ENCODE measurements at regions of chr1 and their contacts with region 1.

Region 1: DNA sequence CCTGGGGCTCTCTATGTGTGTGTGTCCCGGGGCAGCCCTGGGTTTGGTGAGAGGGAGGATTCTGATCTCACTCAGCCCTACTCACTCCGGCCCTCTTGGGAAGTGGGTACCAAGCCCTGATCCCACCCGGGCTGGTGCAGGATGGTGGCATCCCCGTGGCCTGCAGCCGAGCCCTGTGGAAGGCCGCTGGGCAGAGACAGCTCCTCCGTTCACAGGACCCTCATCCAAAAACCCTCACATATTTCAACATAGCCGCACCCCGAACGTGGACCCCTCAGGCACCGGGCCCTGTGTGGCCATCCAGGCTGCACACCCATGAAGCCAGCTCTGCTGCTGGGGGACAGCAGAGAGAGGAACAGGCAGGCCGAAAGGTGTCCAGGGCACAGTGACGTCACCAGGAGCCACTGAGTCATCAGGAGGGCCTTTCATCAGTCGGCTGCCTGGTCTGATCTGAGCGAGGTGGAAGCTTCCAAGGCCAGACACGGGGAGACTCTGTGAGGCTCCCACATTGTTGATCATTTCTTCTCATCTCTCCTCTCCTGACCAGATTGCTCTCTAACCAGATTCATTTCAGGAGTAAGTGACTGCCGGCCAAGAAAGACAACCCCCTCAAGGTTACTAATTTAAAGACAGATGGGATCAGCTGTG is 16.2 kb upstream of the GPR157 start:
- DNase-seq: no peak
- H3K4me3 ChIP-seq: no peak overlapping the region
- H3K27me3 ChIP-seq: no peaks in the 10 kb centered on the region
- CTCF ChIP-seq: no peak

Region 2: GRCh38 chr1:9128520-9129265 is 16.5 kb before region 1 on chr1 and contains the start of gene GPR157:
- CTCF ChIA-PET with region 1: interaction called, 36 read pairs
- POLR2A ChIA-PET with region 1: interaction called, 7 read pairs
- DNase-seq: no peak
- H3K4me3 ChIP-seq: peak within 1 kb of the TSS; percentile 46
- H3K27me3 ChIP-seq: no peaks in the 10 kb centered on the region
- CTCF ChIP-seq: 0 out of 2 replicates have a peak, but pooled peaks have one; percentile 20
- polyA plus RNA-seq, gene GPR157: 1.9 and 2.5 TPM in 2 replicates

Region 3: DNA sequence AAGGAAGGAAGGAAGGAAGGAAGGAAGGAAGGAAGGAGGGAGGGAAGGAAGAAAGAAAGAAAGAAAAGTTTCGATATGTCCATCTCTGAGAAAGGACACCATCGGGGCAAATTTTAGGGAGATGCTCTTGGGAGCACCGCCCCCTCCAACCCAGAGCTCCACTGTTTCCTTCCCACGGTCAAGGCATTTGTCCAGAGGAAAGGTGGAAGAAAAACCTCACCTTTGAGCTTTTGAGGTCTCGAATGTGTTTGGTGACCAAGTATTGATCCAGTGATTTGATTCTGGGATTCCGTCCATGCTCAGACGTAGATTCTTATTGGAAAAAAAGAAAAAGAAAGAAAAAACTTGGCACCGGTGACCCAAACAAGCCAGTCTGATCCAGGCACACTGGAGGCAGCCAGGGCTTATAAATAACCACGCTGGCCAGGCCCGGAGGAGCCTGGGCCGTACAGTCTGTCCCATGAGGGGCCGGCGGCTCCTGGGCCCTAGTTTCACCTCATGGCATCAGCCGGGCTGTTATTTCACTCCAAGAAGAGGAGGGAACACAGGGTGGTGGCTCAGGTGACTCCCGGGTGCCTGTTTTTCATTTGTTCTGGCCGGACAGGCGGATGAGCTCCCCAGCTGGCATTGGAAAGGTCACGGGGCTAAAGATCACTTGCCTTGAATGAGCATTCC is 358.0 kb after region 1 on chr1:
- CTCF ChIA-PET with region 1: no interaction called
- POLR2A ChIA-PET with region 1: no interaction called
- DNase-seq: no peak
- H3K4me3 ChIP-seq: no peak overlapping the region
- H3K27me3 ChIP-seq: peaks cover 6% of the 10 kb centered on the region
- CTCF ChIP-seq: no peak

Measured in BJ (cell line).